ENCODE measurements at regions of chr14 and their contacts with region 1.

Region 1: DNA sequence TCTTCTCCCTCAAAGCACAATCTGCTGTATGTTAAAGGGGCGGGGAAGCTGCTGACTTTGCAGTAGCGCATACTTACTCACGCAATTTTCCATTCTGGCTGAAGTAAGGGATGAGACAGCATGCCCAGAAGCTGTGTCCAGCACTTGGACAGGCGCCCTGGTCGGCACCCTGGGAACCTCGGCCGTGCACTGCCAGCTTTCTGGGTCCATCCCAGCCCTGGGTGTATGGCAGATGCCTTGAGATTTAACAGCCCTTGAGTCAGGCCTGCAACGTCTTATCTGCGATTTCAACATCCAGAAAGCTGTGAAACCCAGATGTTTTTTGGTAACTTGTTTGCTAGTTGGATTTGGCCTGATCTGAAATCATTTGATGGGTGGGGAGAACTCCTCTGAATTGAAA is 16.1 kb downstream of the EML1 start:
- DNase-seq: peak; percentile 92

Region 2: DNA sequence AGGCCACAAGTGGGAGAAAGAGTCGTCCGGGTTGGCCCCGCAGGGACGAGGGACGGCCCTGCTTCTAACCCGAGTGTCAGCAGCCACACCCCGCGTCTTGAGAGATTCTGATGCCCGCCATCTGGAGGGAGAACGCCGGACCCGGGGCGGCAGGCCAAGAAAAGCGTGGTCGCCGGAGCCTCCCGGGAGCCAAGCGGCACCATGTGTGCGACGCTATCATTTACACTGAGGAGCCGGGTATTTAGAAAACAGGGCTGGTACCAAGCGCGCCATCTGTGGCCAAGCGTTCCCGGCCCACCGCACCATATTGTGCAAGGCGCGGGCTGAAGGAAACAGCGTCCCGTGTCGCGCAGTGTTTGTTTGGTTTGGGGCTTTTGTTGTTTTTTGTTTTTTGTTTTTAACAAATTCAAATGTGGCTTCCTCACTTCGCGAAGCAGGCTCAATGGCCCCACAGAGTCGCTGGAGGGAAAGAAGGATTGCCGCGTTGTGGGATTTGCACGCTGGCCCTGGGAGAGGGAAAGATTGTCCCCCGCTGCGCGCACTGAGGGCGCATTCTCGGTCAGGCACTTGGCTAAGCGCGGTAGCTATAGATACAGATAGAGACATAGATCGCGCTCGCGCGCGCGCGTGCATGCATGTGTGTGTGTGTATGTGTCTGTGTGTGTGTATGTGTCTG is 691.2 kb before region 1 on chr14:
- intact Hi-C with region 1: loop called in 1 of 2 experiments (anchors 10 kb)
- DNase-seq: no peak

Measured in posterior vena cava (tissue), 2 donors.